Left colon (tissue), 2 donors: ENCODE measurements at regions of chr5 and their contacts with region 1.

Region 1: GRCh38 chr5:150846654-150847333 is 473 bp downstream of the IRGM start:
- DNase-seq: peak; percentile 32
- ATAC-seq: peak; percentile 97

Region 2: GRCh38 chr5:150560401-150561193 is 286.2 kb before region 1 on chr5:
- intact Hi-C with region 1: loop called in 1 of 2 experiments (anchors 10 kb)
- DNase-seq: peak; percentile 81 to 89
- ATAC-seq: peak; percentile 87

Region 3: DNA sequence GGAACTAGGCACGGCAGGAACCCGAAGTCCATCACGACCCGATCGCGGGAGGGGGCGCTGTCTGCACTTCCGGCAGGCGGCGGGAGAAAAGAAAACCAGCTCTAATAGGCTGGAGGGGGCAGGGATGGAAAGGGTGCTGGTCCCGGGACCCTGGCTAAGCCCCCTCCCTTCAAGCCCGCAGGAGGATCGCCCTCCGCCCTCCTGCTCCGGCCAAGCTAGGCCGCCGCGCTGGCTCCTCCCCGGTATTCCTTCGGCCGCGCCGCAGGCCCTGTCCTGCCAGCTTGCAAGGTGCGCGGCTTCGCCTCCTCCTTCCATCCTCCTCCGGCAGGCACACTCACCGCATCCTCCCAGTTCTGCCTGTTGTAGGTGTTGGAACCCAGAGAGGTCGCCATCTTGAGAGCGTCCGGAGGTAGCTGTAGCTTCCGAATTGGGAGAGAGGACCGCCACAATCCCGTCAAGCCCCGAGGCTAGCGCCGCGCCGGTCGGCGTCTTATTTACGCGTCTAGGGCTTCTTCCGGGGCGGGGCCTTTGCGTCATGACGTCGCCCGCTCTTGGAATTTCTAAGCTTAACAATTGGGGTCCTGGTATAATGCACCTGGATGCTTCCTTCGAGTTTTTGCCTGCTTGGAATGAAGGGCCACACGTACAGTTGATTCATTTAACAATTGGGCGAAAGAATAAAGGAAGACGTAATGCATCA is 146.1 kb before region 1 on chr5 and contains the start of gene RBM22:
- intact Hi-C with region 1: loop called in 1 of 2 experiments (anchors 10 kb)
- DNase-seq: peak; percentile 91 to 97
- ATAC-seq: peak; percentile 93
- total RNA-seq, gene RBM22: 29.3 to 39.5 TPM

Region 4: GRCh38 chr5:150801117-150801927 is 45.5 kb before region 1 on chr5:
- intact Hi-C with region 1: loop called in 1 of 2 experiments (anchors 2 kb)
- DNase-seq: peak in 1 of 2 donors; percentile 25
- ATAC-seq: peak; percentile 94

Region 5: DNA sequence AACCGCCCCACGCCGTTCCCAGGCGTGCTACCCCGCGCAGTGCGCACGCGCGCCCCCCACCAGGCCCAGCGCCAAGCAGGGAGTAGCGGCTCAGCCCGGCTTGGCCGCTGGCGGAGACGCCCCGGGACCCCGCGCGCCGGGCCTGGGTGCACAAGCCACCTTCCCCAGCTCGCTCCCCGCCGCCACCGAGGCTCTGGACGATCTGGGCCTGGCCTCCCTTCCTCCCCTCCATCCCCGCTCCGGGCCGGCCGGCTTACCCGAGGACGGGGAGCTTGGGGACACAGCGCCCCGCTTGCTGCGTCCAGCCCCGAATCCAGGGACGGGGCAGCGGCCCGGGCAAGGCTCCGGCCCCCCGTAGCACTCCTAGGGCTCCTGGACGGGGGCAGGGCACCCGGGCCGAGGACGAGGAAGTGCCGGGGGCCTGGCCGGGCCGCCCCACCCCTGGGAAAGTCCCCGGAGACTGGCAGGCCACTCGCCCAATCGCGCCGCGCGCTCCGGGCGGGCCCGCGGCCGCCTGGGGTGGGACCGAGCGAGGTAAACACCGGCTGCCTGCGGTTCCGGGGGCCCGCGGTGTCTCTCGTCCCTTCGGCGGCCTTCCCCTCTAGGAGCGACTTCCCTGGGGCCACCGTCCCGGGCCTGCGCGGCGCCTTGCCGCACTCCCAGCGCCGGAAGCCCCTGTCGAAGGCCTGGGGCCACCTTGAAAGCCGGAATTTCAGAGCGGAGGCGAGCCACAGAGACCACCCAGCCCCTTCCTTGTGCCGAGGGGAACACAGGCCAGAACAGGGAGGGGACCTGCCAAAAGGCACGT is 234.0 kb after region 1 on chr5 and contains the start of gene TNIP1:
- intact Hi-C with region 1: no loop called
- DNase-seq: peak; percentile 94
- ATAC-seq: peak; percentile 79
- total RNA-seq, gene TNIP1: 200 to 215 TPM